GM10248 (cell line): ENCODE measurements at regions of chr6 and their contacts with region 1.

Region 1: DNA sequence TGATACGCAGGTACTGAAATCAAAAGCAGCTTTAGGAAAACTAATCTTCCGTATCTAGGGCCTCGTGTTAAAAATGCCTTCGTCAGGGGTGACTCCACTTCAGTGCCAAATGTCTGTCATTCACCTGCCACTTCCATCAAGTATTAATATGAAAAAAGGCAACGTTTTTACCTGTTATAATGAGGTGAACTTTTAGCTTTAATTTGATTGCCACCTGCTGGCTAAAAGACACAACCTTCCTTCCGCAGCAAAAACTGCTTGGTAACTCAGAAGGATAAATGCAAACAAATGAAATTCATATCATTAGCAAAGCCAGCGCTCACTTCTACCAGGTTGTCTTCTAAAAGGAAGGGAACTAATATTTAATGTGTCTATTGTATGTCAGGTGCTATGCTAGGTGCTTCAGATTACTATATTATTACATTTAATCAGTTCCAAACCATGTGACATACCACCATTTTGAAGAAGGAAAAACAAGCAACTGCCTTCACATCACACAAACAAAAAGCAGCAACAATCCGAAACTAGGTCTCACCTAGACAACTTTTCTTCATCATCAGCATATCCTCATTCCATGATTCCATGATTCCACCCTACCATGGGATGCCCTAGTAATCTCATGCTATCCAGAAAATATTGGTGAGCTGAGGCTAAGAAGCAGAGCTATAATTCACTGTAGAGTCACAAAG is 20.6 kb upstream of the ARHGAP18 start:
- DNase-seq: peak; percentile 45
- CTCF ChIP-seq: peak; percentile 76

Region 2: DNA sequence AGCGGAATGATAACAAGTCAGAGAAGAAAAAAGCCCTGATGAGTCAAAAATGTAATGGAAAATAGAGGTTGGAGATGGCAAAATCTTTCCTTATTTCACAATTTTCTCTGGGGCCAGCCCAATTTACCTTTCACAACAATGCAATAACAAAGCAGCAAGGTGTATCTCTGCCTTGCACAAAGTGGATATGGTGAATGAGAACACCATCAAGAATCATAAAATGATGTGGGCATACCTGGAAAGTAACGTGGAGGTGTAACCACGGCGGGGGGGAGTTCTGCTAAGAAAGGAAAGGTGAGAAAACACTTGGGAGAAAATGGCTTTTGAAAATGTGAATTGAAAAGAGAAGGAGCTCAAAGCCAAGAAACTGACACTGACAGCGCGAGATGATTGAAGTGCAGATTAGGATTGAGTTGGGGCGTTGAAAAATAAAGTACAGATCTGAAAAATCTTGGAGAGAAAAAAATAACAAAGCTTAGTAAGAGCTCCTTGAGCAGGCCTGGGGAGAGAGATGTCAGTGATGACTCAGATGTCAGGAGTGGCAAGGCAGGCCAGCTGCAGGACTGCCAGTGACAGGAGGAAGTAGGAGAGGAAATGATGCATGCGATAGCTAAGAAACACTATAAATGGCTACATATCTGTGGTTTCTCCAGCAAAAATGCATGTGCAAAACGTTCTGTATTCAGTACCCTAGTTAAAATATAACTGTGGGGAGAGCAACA is 46.9 kb before region 1 on chr6:
- CTCF ChIA-PET with region 1: interaction called, 11 read pairs
- POLR2A ChIA-PET with region 1: no interaction called
- DNase-seq: peak; percentile 86
- CTCF ChIP-seq: no peak

Region 3: DNA sequence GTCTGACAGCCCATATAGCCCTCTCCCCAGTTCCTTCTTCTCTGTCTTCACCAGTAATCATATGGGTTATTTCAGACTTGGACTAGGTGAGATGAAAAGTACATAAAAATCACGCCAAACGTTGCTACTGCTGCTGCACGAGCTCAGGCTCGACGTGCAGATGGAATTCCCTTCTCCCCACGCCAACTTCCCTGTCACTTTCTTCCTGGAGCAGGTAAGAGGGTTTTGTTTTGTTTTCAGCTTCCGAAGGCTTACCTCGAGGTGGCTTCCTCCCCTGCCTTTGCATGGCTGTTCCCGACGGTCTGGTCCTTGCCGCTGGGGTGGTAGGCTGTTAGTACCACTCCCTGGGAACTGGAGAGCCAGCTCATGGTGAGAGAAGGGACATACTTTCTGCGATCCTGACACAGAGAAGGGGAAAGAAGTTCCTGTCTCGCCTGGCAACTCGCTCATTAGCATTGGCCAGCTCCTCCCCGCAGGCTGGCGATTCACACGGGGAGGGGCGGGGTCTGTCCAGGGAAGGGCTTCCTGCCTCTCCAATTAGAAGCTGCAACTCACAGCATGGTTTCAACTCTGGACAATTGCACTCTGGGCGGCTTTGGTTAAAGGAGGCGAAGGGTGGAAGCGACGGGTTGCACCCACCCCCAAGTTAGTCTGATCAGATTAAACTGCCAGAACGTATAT is 20.7 kb before region 1 on chr6 and contains the start of gene ARHGAP18:
- CTCF ChIA-PET with region 1: interaction called, 41 read pairs
- POLR2A ChIA-PET with region 1: interaction called, 4 read pairs
- DNase-seq: peak; percentile 80
- CTCF ChIP-seq: no peak

Region 4: DNA sequence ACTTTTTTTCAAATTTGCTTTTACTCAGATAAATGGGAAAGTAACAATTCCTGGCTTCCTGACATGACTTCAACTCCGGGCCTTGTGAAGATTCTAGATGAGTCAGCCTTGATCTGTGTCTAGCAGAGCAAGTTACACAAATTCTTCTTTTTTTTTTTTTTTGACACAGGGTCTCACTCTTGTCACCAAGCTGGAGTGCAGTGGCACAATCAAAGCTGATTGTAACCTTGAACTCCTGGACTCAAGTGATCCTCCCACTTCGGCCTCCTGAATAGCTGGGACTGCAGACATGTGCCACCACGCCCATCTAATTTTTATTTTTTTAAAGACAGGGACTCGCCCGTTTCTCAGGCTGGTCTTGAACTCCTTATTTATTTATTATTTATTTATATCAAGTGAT is 13.3 kb before region 1 on chr6:
- CTCF ChIA-PET with region 1: interaction called, 41 read pairs
- POLR2A ChIA-PET with region 1: no interaction called
- DNase-seq: no peak
- CTCF ChIP-seq: no peak

Region 5: GRCh38 chr6:129748212-129748900 is 17.7 kb after region 1 on chr6:
- CTCF ChIA-PET with region 1: interaction called, 86 read pairs
- POLR2A ChIA-PET with region 1: no interaction called
- DNase-seq: peak; percentile 59
- CTCF ChIP-seq: no peak